Mammary epithelial cell (primary cell): ENCODE measurements at regions of chr13 and their contacts with region 1.

Region 1: DNA sequence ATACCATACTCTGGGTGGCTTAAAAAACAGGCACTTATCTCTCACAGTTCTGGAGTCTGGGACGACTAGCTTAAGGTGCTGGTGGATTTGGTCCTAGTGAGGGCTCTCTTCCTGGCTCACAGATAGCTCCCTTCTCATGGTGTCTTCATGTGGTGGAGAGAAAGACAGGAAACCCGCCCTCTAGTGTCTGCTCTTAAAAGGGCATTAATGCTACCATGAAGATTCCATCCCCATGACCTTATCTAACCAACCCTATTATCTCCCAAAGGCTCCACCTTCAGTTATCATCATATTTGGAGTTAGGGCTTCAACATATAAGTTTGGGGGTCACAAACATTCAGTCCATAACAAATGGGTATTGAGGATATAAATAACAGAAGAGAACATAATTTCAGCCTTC is 139.4 kb downstream of the HS6ST3 start:
- DNase-seq: peak; percentile 32
- H3K4me3 ChIP-seq: no peak overlapping the region
- H3K27ac ChIP-seq: no peak overlapping the region
- H3K4me1 ChIP-seq: peaks cover 7% of the 10 kb centered on the region
- H3K27me3 ChIP-seq: no peaks in the 10 kb centered on the region
- CTCF ChIP-seq: peak; percentile 61 to 75

Region 2: GRCh38 chr13:96193728-96194310 is 35.5 kb before region 1 on chr13:
- CTCF ChIA-PET with region 1: no interaction called
- dilution Hi-C with region 1: loop called (anchors 5 kb)
- in situ Hi-C with region 1: no loop called
- intact Hi-C with region 1: no loop called
- DNase-seq: no peak
- H3K4me3 ChIP-seq: no peak overlapping the region
- H3K27ac ChIP-seq: no peak overlapping the region
- H3K4me1 ChIP-seq: no peaks in the 10 kb centered on the region
- H3K27me3 ChIP-seq: no peaks in the 10 kb centered on the region
- CTCF ChIP-seq: no peak